SK-N-SH (cell line): ENCODE measurements at regions of chr6 and their contacts with region 1.

Region 1: GRCh38 chr6:27505209-27506027 is 32.5 kb upstream of the ZNF184 start:
- DNase-seq: no peak
- H3K4me3 ChIP-seq: no peak overlapping the region
- H3K27ac ChIP-seq: no peak overlapping the region
- H3K4me1 ChIP-seq: peaks cover 0 to 9% of the 10 kb centered on the region in 2 experiments; a peak in 2 of 4 replicates
- H3K27me3 ChIP-seq: peaks cover 33% of the 10 kb centered on the region; the same call in 1 of the 2 replicates
- CTCF ChIP-seq: no peak
- EP300 ChIP-seq: no peak
- RAD21 ChIP-seq: no peak

Region 2: DNA sequence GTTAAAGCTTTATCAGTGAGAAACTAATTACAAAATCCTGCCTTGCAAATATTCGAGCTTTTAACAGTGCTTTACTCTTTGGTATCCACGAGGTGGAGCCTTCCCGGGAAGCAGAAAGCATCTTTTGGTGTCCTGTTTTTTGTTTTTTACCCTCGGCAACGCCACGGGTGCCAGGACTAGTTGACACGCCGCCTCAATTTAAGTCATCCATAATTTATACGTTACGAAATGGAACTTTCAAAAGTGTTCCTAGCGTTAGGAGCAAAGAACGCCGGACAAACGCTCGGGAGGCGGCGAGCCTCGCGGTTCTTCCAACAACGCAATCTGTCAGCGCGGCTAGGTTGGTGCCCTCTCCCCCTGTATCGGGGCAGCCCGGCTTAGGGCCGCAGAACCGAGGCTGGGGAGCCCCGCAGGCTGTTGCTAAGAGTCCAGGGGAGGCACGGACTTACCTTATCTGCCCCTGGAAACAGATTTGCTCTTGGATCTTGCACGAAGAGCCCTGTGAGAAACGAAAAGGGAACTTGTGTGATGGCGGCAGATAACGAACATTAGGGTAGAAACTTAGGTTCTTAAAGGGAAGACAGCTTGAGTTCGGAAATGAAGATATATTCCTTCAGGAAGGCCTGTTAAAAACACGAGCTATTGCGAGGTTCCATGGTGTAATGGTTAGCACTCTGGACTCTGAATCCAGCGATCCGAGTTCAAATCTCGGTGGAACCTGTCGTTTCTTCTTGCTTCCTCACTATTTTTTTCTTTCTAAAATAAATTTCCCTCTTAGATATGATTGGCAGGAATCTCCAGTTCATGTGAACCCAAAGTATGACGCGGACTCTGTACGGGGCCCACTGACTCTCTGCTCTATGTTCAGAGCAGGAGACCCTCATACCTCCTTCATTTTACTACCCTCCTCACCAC is 13.7 kb after region 1 on chr6:
- CTCF ChIA-PET with region 1: interaction called, 43 read pairs
- POLR2A ChIA-PET with region 1: no interaction called
- DNase-seq: peak; percentile 67
- H3K4me3 ChIP-seq: peak overlapping the region; percentile 93 to 97
- H3K27ac ChIP-seq: peak overlapping the region in 1 of 2 experiments; percentile 53; a peak in 2 of 4 replicates
- H3K4me1 ChIP-seq: peaks cover 0 to 3% of the 10 kb centered on the region in 2 experiments; a peak in 2 of 4 replicates
- H3K27me3 ChIP-seq: peaks cover 23% of the 10 kb centered on the region
- CTCF ChIP-seq: peak; percentile 86
- EP300 ChIP-seq: no peak
- RAD21 ChIP-seq: peak; percentile 57